ENCODE measurements at regions of chr19 and their contacts with region 1.

Region 1: DNA sequence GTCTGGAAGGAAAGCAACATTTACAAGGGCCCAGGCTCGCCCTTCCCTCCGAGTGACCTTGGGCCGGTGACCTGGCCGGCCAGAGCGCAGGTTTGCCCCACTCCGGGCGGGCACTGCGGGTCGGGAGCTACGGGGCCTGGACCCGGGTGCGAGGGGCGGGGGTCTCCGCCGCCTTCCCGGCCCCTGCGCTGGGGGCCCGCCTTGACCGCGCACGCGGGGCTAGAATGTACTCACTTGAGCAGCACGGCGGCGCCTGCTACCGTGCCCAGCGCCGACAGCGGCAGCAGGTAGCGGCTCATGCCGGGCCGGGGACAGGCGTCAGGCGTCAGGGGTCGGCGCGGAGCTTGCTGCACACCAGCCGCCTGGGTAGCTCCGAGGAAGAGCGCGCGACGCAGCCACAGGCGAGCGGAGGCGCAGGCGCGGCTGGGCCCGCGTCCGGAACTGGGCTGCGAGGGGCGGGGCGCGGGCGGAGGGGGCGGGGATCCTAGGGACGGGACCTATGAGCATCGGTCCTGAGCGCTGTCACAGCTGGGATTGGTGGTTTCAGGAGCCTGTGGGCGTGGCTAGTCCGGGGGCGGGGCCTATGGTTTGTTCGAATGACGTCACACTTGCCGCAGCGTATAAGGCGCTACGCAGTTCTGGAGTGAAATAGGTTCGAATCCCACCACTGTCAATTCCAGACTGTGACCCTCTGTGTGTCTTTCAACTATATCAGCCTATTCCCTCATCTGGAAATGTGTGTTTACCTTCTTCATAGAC is at the start of gene RDH13:
- DNase-seq: peak; percentile 99
- ATAC-seq: peak; percentile 100
- H3K4me3 ChIP-seq: peak within 1 kb of the TSS; percentile 90
- H3K27ac ChIP-seq: peak within 1 kb of the TSS; percentile 20; the same call in 1 of the 2 replicates
- H3K4me1 ChIP-seq: peaks cover 12% of the 10 kb centered on the region
- H3K27me3 ChIP-seq: no peaks in the 10 kb centered on the region
- CTCF ChIP-seq: no peak
- total RNA-seq, gene RDH13: 80.4 and 85.7 TPM in 2 replicates

Region 2: GRCh38 chr19:55044673-55045443 is 18.1 kb before region 1 on chr19:
- CTCF ChIA-PET with region 1: interaction called, 10 read pairs
- POLR2A ChIA-PET with region 1: no interaction called
- intact Hi-C with region 1: no loop called
- DNase-seq: no peak
- ATAC-seq: no peak
- H3K4me3 ChIP-seq: no peak overlapping the region
- H3K27ac ChIP-seq: no peak overlapping the region
- H3K4me1 ChIP-seq: no peaks in the 10 kb centered on the region
- H3K27me3 ChIP-seq: no peaks in the 10 kb centered on the region
- CTCF ChIP-seq: no peak

Region 3: DNA sequence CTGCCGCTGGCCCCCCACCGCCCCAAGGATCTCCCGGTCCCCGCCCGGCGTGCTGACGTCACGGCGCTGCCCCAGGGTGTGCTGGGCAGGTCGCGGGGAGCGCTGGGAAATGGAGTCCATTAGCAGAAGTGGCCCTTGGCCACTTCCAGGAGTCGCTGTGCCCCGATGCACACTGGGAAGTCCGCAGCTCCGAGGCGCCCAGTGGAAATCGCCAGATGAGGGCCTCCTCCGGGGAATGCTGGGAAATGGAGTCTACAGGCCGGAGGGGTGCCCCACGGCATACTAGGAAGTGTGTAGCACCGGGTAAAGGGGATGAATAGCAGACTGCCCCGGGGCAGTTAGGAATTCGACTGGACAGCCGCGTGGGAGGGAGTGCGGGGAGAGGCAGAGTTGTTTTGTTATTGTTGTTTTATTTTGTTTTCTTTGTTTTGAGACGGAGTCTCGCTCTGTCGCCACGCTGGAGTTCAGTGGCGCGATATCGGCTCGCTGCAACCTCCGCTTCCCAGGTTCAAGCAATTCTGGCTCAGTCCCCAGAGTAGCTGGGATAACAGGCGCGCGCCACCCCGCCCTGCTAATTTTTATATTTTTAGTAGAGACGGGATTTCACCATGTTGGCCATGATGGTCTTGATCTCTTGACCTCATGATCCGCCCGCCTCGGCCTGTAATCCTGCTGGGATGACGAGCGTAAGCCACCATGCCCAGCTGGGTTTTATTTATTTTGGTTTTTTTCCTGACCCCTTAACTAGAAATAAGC is 54.9 kb after region 1 on chr19 and contains the start of gene PPP1R12C:
- CTCF ChIA-PET with region 1: no interaction called
- POLR2A ChIA-PET with region 1: no interaction called
- intact Hi-C with region 1: loop called (anchors 5 kb)
- DNase-seq: peak; percentile 99
- ATAC-seq: peak; percentile 94
- H3K4me3 ChIP-seq: peak within 1 kb of the TSS; percentile 90
- H3K27ac ChIP-seq: no peak within 1 kb of the TSS
- H3K4me1 ChIP-seq: peaks cover 12% of the 10 kb centered on the region
- H3K27me3 ChIP-seq: no peaks in the 10 kb centered on the region
- CTCF ChIP-seq: no peak
- total RNA-seq, gene PPP1R12C: 136 and 180 TPM in 2 replicates

Region 4: DNA sequence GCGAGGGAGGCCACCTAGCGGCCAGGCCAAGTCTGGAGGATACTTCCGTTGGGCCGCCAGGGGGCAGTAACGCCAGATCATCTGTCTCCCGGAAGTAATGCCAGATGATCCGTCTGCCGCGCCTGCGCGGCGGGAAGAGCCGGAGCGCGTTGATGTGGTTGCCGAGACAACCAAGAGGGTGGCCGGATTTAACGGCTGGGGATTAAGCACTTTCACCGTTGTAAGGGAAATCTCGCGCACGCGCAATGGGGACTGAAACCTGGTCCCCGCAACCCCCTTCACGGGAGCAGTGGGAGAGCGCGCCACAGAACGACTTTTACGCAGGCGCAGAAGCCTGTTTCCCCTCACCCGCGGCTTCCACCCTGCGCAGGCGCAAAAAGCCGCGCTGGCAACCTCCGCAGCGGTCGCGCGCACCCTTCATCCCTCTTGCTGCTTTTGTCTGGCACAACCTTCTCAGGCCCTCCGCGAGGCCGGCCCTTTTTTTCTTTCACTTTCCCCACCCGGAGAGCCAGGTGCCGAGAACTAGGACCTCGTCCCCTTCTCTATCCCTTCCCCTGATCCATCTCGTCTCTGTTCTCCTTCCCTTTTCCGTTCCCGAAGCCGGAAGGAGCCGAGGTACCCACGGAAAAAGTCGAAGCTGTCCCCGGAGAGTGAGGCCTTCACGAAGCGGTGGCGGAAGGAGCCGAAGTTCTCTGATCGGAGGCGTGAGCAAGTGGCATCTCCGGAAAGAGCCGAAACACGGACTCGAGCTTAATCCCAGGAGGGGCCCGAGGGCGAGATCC is 591.0 kb after region 1 on chr19:
- CTCF ChIA-PET with region 1: interaction called, 12 read pairs
- POLR2A ChIA-PET with region 1: no interaction called
- intact Hi-C with region 1: no loop called
- DNase-seq: peak; percentile 100
- ATAC-seq: peak; percentile 79
- H3K4me3 ChIP-seq: peak overlapping the region; percentile 78
- H3K27ac ChIP-seq: peak overlapping the region; percentile 80
- H3K4me1 ChIP-seq: peaks cover 12% of the 10 kb centered on the region
- H3K27me3 ChIP-seq: no peaks in the 10 kb centered on the region
- CTCF ChIP-seq: peak; percentile 99

Measured in PC-3 (cell line).